Pancreas (tissue), 10 donors: ENCODE measurements at regions of chr1 and their contacts with region 1.

Region 1: DNA sequence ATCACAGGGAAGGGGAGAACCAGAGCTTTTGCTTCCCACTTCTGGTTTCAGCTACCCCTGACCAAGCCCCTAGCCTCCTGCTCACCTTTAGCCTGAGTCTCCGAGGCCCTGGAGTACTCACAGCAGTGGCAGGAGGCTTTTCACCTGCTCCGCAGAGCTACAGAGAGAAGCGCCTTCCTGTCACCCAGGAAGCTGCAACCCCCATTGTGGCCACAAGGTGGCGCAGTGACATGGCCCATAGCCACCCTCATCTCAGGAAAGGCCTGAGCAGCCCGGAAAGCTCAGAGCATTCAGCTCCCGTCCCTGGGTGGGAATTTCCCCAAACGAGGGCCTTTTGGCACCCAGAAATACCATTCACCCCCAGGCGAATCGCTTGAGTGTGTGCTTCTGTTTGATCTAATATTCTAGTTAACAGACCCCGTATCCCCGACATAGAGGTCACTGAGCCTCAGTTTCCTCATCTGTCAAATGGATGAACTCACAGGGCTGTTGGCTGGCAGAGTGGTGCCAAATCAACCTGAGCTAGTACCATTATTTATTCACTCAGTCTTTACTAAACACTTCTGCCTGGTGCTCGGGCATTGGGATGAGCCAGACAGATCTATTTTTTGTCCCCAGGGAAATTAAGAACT is 25.3 kb downstream of the A3GALT2 start:
- DNase-seq: peak; percentile 73 to 99 (median 90)
- ATAC-seq: peak; percentile 92 to 97 (median 96)
- H3K4me3 ChIP-seq: no peak overlapping the region
- H3K27ac ChIP-seq: no peak overlapping the region
- H3K4me1 ChIP-seq: no peaks in the 10 kb centered on the region
- H3K27me3 ChIP-seq: no peaks in the 10 kb centered on the region
- CTCF ChIP-seq: peak; percentile 92 to 100 (median 98)

Region 2: DNA sequence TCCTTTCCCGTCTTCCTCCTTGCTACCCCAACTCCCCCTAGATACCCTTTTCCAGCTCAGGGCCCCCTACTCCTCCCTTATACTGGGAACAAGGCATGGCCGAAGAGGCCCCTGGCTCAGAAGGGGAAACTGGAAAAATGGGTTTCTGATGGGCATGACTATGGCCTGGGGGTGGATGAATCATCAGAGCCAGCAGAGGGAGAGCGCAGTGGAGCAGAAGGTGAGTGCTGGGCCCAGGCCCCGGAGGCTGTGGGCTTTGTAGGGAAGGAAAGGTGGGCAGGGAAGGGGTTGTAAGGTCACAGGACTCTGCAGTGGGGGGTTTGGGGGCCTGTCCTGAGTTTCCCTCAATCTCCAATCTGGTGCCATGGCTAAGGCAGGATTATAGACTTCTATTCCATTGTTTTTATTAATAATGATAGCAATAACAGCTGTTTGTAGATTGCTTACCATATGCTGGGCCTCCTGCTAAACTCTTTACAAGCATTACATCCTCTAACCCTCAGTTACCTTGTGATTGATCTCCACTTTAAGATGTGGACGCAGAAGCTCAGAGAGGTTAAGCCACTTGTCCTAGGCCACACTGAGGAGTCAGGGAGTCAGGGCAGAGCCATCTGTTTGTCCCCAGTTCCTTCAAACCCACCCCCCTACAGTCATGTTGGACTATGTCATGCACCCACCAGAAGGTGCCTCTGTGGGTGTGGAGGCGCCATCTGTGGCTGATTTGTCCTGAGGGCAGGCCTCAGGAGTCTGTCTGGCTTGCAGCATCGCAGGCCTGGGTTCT is 75.5 kb before region 1 on chr1:
- intact Hi-C with region 1: loop called in 1 of 3 experiments (anchors 10 kb)
- DNase-seq: no peak
- ATAC-seq: peak in 1 of 4 donors; percentile 35
- H3K4me3 ChIP-seq: no peak overlapping the region
- H3K27ac ChIP-seq: no peak overlapping the region
- H3K4me1 ChIP-seq: no peaks in the 10 kb centered on the region
- H3K27me3 ChIP-seq: no peaks in the 10 kb centered on the region
- CTCF ChIP-seq: no peak

Region 3: GRCh38 chr1:33367485-33368405 is 72.2 kb after region 1 on chr1:
- intact Hi-C with region 1: loop called in 2 of 3 experiments (anchors 2 to 5 kb)
- DNase-seq: peak; percentile 73 to 97 (median 88)
- ATAC-seq: peak; percentile 62 to 85 (median 77)
- H3K4me3 ChIP-seq: no peak overlapping the region
- H3K27ac ChIP-seq: no peak overlapping the region
- H3K4me1 ChIP-seq: peaks cover 15 to 19% (median 16%) of the 10 kb centered on the region in 3 donors
- H3K27me3 ChIP-seq: no peaks in the 10 kb centered on the region
- CTCF ChIP-seq: peak; percentile 91 to 96 (median 94)